ENCODE measurements at regions of chr17 and their contacts with region 1.

Region 1: GRCh38 chr17:38879878-38880682 is 10.2 kb downstream of the LASP1 start:
- DNase-seq: peak; percentile 73 to 84
- ATAC-seq: peak; percentile 16
- H3K4me3 ChIP-seq: no peak overlapping the region
- H3K27ac ChIP-seq: peak overlapping the region; percentile 44 to 65
- H3K4me1 ChIP-seq: peaks cover 2 to 8% of the 10 kb centered on the region in 2 donors
- H3K27me3 ChIP-seq: no peaks in the 10 kb centered on the region

Region 2: DNA sequence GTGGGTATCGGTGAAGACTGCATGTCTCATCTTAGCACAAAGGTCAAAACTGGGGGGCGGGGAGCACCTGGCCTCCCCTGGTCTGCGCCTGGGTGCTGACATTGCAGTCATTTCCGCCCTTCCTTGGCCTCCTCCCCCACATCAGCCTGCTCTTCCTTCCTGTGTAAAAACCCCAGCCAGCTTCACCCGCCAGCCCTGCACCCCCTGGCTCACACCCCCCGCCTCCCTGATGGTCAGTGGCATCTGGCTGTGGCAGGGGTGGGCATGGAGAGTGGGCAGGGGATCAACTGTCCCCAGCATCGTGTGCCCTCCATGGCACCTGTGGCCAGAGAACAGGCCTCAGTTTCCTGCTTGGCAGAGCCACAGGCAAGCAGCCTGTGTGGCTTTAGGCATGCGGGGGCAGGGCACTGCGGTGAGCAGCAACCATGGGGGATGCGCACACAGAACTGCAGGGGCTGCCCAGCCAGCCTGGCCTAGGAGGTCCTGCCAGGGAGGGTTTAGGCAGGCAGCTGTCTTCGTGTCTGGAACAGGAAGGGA is 18.8 kb after region 1 on chr17:
- intact Hi-C with region 1: no loop called
- DNase-seq: peak in 1 of 2 donors; percentile 64
- ATAC-seq: no peak
- H3K4me3 ChIP-seq: no peak overlapping the region
- H3K27ac ChIP-seq: no peak overlapping the region
- H3K4me1 ChIP-seq: peaks cover 3 to 5% of the 10 kb centered on the region in 2 donors
- H3K27me3 ChIP-seq: no peaks in the 10 kb centered on the region

Region 3: DNA sequence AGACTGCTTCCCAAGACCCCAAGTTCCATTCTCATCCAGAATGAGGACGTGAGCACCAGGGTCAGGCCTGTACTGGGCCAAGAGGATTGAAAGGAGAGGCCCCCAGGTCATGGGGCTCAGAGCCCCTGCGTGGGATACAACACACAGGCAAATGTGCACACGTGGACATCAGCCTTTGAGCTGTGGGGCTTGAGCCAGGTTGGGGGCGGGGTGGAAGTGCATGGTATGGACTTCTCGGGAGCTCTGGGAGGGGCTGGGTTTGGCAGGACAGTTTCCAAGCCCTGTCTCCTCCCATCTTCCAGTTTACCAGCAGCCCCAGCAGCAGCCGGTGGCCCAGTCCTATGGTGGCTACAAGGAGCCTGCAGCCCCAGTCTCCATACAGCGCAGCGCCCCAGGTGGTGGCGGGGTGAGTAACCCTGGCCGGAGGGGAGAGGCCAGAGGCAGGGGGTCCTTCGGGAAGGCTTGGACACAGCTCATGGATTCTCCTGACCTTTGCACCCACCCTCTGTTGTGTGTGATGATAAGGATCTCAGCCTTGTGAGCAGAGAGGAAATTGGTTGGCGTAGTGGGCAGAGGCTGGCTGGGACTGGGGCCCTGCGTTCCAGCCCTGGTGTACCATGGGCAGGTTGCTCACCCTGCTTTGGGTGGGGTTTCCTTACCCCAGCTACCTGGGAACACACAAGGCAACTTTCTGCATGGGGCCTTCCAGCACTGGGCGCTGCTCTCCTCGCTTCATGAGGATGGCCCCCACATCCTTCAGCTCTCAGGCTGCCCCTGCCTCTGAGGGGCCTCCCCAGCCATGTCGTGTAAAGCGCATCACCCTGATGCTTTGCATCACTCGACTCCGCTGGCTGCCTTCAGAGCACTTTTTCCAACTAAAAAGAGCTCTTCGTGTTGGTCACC is 34.9 kb after region 1 on chr17:
- intact Hi-C with region 1: loop called in 1 of 2 experiments (anchors 5 kb)
- DNase-seq: peak; percentile 38 to 58
- ATAC-seq: no peak
- H3K4me3 ChIP-seq: no peak overlapping the region
- H3K27ac ChIP-seq: no peak overlapping the region
- H3K4me1 ChIP-seq: no peaks in the 10 kb centered on the region
- H3K27me3 ChIP-seq: no peaks in the 10 kb centered on the region